Naive thymus-derived CD4-positive, alpha-beta T cell (primary cell): ENCODE measurements at regions of chr10 and their contacts with region 1.

Region 1: DNA sequence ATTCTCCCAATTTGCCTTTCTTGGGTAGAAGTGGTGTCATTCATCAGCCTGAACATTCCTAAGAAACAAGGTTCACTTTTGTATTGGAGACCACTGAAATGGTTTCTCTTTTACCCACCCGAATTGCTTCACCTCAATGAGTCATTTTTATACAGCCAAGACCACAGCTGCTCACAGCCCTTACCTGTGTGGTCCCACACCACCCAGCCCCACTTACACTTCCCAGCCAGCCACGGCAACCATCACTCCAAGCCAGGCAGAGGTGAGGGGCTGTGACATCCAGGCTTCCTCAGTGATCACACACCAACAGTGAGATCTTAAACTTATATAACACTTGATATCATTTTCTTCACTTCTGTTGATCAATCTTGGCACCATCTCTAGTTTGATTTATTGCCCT is 20.7 kb downstream of the OR13A1 start:
- DNase-seq: no peak
- ATAC-seq: no peak
- H3K4me3 ChIP-seq: no peak overlapping the region
- H3K4me3 Mint-ChIP-seq: no peak overlapping the region
- H3K27ac ChIP-seq: no peak overlapping the region
- H3K27ac Mint-ChIP-seq: no peak overlapping the region
- H3K4me1 ChIP-seq: no peaks in the 10 kb centered on the region
- H3K4me1 Mint-ChIP-seq: peaks cover 0 to 20% (median 0%) of the 10 kb centered on the region in 7 donors
- H3K27me3 ChIP-seq: no peaks in the 10 kb centered on the region
- H3K27me3 Mint-ChIP-seq: peaks cover 6 to 31% (median 11%) of the 10 kb centered on the region in 5 donors

Region 2: DNA sequence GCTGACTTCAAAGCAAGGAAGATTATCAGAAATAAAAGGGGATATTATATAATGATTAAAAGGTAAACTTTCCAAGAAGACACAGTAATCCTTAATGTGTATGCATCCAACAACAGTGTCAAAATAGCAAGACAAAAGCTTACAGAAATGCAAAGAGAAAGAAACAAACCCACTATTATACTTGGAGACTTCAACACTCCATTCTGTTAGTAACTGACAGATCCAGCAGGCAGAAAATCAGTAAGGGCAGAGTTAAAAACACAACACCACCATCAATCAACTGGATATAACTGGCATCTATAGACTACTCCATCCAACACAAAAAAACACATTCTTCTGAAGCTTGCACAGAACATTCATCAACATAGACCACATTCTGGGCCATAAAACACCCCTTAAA is 83.1 kb before region 1 on chr10:
- CTCF ChIA-PET with region 1: no interaction called
- POLR2A ChIA-PET with region 1: no interaction called
- intact Hi-C with region 1: no loop called
- DNase-seq: no peak
- ATAC-seq: no peak
- H3K4me3 ChIP-seq: no peak overlapping the region
- H3K4me3 Mint-ChIP-seq: no peak overlapping the region
- H3K27ac ChIP-seq: no peak overlapping the region
- H3K27ac Mint-ChIP-seq: no peak overlapping the region
- H3K4me1 ChIP-seq: no peaks in the 10 kb centered on the region
- H3K4me1 Mint-ChIP-seq: no peaks in the 10 kb centered on the region
- H3K27me3 ChIP-seq: no peaks in the 10 kb centered on the region
- H3K27me3 Mint-ChIP-seq: peaks cover 17 to 37% (median 37%) of the 10 kb centered on the region in 5 donors

Region 3: GRCh38 chr10:45353186-45353585 is 58.5 kb after region 1 on chr10:
- CTCF ChIA-PET with region 1: no interaction called
- POLR2A ChIA-PET with region 1: no interaction called
- intact Hi-C with region 1: loop called in 1 of 2 experiments (anchors 10 kb)
- DNase-seq: no peak
- ATAC-seq: no peak
- H3K4me3 ChIP-seq: no peak overlapping the region
- H3K4me3 Mint-ChIP-seq: no peak overlapping the region
- H3K27ac ChIP-seq: no peak overlapping the region
- H3K27ac Mint-ChIP-seq: peak overlapping the region in 1 of 9 donors; percentile 2
- H3K4me1 ChIP-seq: no peaks in the 10 kb centered on the region
- H3K4me1 Mint-ChIP-seq: peaks cover 0 to 24% (median 8%) of the 10 kb centered on the region in 7 donors
- H3K27me3 ChIP-seq: no peaks in the 10 kb centered on the region
- H3K27me3 Mint-ChIP-seq: peaks cover 1 to 35% (median 8%) of the 10 kb centered on the region in 5 donors